Gastrocnemius medialis (tissue), 4 donors: ENCODE measurements at regions of chr14 and their contacts with region 1.

Region 1: DNA sequence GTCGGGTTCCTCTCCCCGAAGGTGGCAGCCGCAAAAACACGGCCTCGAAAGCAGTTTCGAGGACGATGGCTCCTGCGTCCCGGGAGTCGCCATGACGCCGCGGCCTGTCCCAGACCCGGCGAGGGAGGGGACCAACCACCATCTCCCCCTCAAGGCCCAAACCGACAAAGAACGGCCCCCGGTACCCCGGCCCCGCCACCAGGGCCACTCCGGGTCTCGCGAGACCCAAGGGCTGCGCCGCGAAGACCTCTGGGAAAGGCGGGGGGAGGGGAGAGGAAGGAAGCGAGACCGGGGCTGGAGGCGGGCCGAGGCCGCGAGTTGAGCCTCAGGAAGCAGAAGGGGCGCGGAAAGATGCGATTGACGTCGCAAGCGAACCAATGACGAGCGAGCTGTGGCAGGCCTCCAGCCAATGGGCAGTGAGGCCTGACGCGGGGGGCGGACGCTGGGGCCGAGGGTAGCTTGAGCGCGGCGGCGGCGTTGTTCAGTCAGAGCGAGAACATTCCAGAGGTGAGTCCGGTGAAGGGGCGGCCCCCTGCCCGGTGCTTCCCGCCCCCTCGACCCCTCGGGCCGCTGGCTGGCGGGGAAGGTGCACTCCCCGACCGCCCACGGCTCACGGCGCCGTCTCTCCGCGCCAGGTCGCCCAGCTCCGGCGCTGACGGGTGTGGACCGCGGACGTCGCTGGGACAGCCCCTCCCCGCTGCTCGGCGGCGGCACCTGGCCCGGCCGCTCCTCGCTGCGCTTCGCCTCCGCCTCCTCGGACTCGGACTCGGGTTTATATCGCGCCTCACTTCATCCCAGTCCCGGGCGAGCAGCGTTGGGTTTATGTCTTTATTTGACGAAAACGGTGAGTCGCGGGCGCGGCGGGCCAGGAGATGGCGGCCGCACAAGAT is at the start of gene EIF5:
- DNase-seq: peak; percentile 99
- ATAC-seq: peak; percentile 90 to 91
- H3K4me3 ChIP-seq: peak within 1 kb of the TSS; percentile 80 to 100 (median 86)
- H3K27ac ChIP-seq: peak within 1 kb of the TSS; percentile 92 to 100 (median 98)
- H3K4me1 ChIP-seq: peaks cover 25 to 35% of the 10 kb centered on the region in 2 donors
- H3K27me3 ChIP-seq: no peaks in the 10 kb centered on the region
- CTCF ChIP-seq: peak; percentile 26 to 72 (median 59)
- POLR2A ChIP-seq: peak; percentile 98 to 100
- total RNA-seq, gene EIF5: 313 to 538 (median 374) TPM

Region 2: GRCh38 chr14:103315351-103315911 is 18.6 kb before region 1 on chr14:
- in situ Hi-C with region 1: no loop called
- intact Hi-C with region 1: loop called (anchors 2 kb)
- DNase-seq: peak in 1 of 2 donors; percentile 57
- ATAC-seq: peak; percentile 70 to 95
- H3K4me3 ChIP-seq: no peak overlapping the region
- H3K27ac ChIP-seq: peak overlapping the region in 3 of 4 donors; percentile 61 to 64 (median 63)
- H3K4me1 ChIP-seq: peaks cover 0 to 6% of the 10 kb centered on the region in 2 donors
- H3K27me3 ChIP-seq: no peaks in the 10 kb centered on the region
- CTCF ChIP-seq: no peak
- POLR2A ChIP-seq: no peak

Region 3: GRCh38 chr14:103385152-103385993 is 51.4 kb after region 1 on chr14 and contains the start of gene MARK3:
- in situ Hi-C with region 1: loop called in 1 of 4 experiments (anchors 10 kb)
- intact Hi-C with region 1: loop called (anchors 1 kb)
- DNase-seq: peak; percentile 95 to 96
- ATAC-seq: peak; percentile 90
- H3K4me3 ChIP-seq: peak within 1 kb of the TSS; percentile 78 to 100 (median 87)
- H3K27ac ChIP-seq: peak within 1 kb of the TSS; percentile 94 to 100 (median 98)
- H3K4me1 ChIP-seq: peaks cover 25% of the 10 kb centered on the region in 2 donors
- H3K27me3 ChIP-seq: no peaks in the 10 kb centered on the region
- CTCF ChIP-seq: peak; percentile 33 to 50 (median 36)
- POLR2A ChIP-seq: peak; percentile 93 to 96
- total RNA-seq, gene MARK3: 60.2 to 73.1 (median 71.6) TPM

Region 4: DNA sequence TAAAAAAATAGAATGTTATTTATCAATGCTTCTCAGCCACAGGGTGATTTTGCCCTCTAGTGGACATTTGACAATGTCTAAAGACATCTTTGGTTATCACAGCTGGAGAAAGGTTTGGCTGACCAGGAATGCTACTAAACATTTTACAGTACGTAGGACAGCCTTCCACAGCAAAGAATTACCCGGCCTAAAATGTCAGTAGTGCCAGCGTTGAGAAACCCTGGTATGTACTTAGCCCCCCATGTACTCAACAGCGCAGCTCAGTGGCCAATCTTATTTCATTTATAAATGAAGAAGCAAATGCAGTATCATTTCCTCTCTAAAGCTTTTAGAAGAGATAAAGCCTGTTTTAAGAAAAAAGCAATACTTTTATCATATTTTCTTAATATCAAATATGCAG is 57.0 kb after region 1 on chr14:
- in situ Hi-C with region 1: loop called in 1 of 4 experiments (anchors 10 kb)
- intact Hi-C with region 1: loop called (anchors 1 kb)
- DNase-seq: no peak
- ATAC-seq: no peak
- H3K4me3 ChIP-seq: no peak overlapping the region
- H3K27ac ChIP-seq: peak overlapping the region in 3 of 4 donors; percentile 5 to 83 (median 32)
- H3K4me1 ChIP-seq: peaks cover 58 to 70% of the 10 kb centered on the region in 2 donors
- H3K27me3 ChIP-seq: no peaks in the 10 kb centered on the region
- CTCF ChIP-seq: peak; percentile 34 to 57 (median 40)
- POLR2A ChIP-seq: no peak

Region 5: DNA sequence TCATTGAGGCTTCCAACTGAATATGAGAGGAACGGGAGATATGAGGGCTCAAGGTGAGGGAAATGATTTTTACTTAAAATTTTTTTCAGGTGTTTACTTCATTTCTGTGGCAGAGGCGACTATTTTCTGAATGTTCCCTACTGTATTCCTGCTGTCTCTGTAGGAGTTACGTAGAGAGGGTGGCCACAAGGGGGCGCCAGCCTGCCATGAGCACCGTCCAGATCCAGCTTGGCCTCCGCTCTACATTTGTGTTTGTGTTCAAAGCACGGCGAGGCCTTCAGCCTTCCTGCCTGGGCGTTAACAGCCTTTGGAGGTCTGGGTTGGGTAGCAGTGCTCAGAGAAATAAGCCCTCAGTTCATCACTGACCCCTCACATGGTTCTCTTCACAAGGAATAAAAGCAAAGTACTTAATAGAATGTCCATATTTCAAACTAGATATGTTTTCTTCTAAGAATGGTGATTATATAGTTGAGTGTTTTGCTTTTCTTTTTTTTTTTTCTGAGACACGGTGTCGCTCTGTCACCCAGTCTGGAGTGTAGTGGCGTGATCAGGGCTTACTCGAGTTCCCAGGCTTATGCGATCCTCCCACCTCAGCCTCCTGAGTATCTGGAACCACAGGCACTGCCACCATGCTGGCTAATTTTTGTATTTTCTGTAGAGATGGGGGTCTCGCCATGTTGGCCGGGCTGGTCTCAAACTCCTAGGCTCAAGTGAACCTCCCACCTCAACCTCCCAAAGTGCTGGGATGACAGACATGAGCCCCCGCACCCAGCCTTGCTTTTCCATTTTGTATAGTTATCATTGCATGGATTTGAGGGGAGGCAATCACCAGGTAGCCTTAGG is 166.4 kb after region 1 on chr14:
- in situ Hi-C with region 1: no loop called
- intact Hi-C with region 1: loop called (anchors 5 kb)
- DNase-seq: peak; percentile 77 to 85
- ATAC-seq: peak; percentile 84 to 88
- H3K4me3 ChIP-seq: no peak overlapping the region
- H3K27ac ChIP-seq: peak overlapping the region; percentile 38 to 63 (median 50)
- H3K4me1 ChIP-seq: peaks cover 24 to 28% of the 10 kb centered on the region in 2 donors
- H3K27me3 ChIP-seq: no peaks in the 10 kb centered on the region
- CTCF ChIP-seq: peak; percentile 82 to 95 (median 83)
- POLR2A ChIP-seq: no peak